Activated B cell treated with CpG ODN at 0.5 μM for 24 hours (primary cell): ENCODE measurements at regions of chr17 and their contacts with region 1.

Region 1: GRCh38 chr17:27353461-27354050 is 59.6 kb downstream of the WSB1 start:
- DNase-seq: peak; percentile 90
- ATAC-seq: peak; percentile 87
- H3K4me3 Mint-ChIP-seq: peak overlapping the region; percentile 89
- H3K27ac Mint-ChIP-seq: peak overlapping the region; percentile 83
- H3K4me1 Mint-ChIP-seq: peaks cover 22% of the 10 kb centered on the region
- H3K27me3 Mint-ChIP-seq: no peaks in the 10 kb centered on the region
- CTCF ChIP-seq: peak; percentile 50

Region 2: GRCh38 chr17:27381007-27381501 is 27.5 kb after region 1 on chr17:
- CTCF ChIA-PET with region 1: interaction called, 3 read pairs
- POLR2A ChIA-PET with region 1: no interaction called
- intact Hi-C with region 1: loop called (anchors 1 kb)
- DNase-seq: peak; percentile 70
- ATAC-seq: peak; percentile 94
- H3K4me3 Mint-ChIP-seq: no peak overlapping the region
- H3K27ac Mint-ChIP-seq: no peak overlapping the region
- H3K4me1 Mint-ChIP-seq: peaks cover 6% of the 10 kb centered on the region
- H3K27me3 Mint-ChIP-seq: peaks cover 18% of the 10 kb centered on the region
- CTCF ChIP-seq: peak; percentile 35